ENCODE measurements at regions of chr14 and their contacts with region 1.

Region 1: GRCh38 chr14:59132796-59133494 is 55.5 kb upstream of the DAAM1 start:
- DNase-seq: no peak
- H3K4me3 ChIP-seq: no peak overlapping the region
- H3K27ac ChIP-seq: no peak overlapping the region
- H3K4me1 ChIP-seq: no peaks in the 10 kb centered on the region
- H3K27me3 ChIP-seq: no peaks in the 10 kb centered on the region
- CTCF ChIP-seq: peak; percentile 13 to 39 (median 14); a peak in 3 of 4 replicates
- EP300 ChIP-seq: no peak
- POLR2A ChIP-seq: no peak
- RAD21 ChIP-seq: peak; percentile 53 to 61

Region 2: GRCh38 chr14:59148334-59148900 is 15.5 kb after region 1 on chr14:
- CTCF ChIA-PET with region 1: interaction called, 10 read pairs
- POLR2A ChIA-PET with region 1: no interaction called
- DNase-seq: no peak
- H3K4me3 ChIP-seq: no peak overlapping the region
- H3K27ac ChIP-seq: no peak overlapping the region
- H3K4me1 ChIP-seq: no peaks in the 10 kb centered on the region
- H3K27me3 ChIP-seq: no peaks in the 10 kb centered on the region
- CTCF ChIP-seq: no peak
- EP300 ChIP-seq: no peak
- POLR2A ChIP-seq: no peak
- RAD21 ChIP-seq: no peak

Measured in H1 (cell line).